Sciatic nerve (tissue), 2 donors: ENCODE measurements at regions of chr21 and their contacts with region 1.

Region 1: DNA sequence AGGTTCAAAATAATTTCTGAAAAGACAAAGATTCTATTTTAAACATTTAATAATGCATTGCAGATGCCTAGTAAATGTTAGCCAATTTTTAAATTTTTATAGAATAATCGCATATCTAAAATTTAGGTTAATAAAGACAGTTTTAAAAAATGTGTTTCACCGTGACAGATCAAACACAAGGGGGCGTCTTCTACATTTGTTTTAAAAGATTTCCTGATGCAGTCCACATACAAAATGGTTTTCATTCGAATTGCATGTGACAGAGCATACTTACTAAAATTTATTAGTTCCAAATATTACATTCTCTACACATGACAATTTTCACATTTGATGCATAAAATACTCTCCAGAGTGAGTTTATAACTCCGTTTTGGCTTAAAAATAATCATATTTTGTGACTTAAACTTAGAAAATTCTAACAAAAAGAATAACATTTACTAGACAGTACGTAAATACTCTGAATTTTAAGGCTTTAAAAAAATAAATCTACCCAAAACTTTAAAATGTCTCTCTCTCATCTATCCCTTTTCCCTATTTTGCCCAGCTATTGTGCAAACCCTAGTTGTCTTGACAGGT is 75.5 kb downstream of the ADAMTS1 start:
- DNase-seq: no peak
- ATAC-seq: peak; percentile 71

Region 2: DNA sequence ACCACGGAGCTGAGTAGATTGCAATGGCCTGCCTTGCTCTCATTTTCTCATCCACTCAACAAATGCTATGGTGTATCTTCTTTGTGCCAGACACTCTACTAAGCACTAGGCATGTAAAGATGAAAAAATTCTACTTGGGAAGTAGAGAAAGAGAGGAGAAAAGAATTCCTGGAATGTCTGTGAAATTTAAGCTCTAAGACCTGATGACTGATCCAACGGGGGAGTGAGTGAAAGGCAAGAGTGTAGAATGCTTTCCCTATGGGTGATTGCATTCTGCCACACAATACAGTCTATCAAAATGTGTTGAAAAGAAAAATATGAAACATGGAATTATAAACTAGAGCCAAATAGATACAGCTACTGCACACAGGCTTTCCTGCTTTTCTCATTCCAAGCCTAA is 278.9 kb before region 1 on chr21:
- intact Hi-C with region 1: no loop called
- DNase-seq: no peak
- ATAC-seq: no peak

Region 3: GRCh38 chr21:26845066-26845758 is 75.5 kb after region 1 on chr21 and contains the start of gene ADAMTS1:
- intact Hi-C with region 1: loop called (anchors 5 kb)
- DNase-seq: peak; percentile 98
- ATAC-seq: peak; percentile 80
- total RNA-seq, gene ADAMTS1: 128 TPM